BJ (cell line): ENCODE measurements at regions of chr17 and their contacts with region 1.

Region 1: DNA sequence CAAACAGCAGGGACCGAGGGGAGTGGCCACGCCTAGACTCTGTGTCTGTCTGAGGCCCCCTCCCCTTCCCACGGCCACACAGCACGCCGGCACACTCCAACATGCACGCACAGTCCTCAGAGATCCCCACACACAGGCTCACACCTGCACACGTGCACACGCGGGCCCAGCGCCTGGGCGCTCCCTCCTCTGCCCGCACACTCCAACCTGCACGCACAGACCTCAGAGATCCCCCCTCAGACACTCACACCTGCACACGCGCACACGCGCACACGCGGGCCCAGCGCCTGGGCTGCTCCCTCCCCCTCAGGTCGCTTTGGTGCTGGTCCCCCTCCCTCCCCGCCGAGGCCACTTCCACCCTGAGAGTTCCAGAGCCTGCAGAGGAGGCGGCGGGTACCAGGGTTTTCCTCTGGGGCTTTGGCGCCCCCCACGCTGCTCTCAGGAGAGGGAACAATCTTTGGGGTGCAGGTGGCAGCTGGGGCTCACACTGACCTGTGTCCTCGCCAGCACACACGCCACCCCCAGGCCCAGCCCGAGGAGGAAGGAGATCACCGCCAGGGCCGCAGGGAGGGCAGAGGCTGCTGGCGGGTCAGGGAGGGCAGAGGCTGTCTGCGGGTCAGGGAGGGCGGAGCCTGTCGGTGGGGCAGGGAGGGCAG is 1.6 kb downstream of the CD7 start:
- DNase-seq: no peak
- H3K4me3 ChIP-seq: no peak overlapping the region
- H3K27me3 ChIP-seq: peaks cover 9% of the 10 kb centered on the region
- CTCF ChIP-seq: no peak

Region 2: DNA sequence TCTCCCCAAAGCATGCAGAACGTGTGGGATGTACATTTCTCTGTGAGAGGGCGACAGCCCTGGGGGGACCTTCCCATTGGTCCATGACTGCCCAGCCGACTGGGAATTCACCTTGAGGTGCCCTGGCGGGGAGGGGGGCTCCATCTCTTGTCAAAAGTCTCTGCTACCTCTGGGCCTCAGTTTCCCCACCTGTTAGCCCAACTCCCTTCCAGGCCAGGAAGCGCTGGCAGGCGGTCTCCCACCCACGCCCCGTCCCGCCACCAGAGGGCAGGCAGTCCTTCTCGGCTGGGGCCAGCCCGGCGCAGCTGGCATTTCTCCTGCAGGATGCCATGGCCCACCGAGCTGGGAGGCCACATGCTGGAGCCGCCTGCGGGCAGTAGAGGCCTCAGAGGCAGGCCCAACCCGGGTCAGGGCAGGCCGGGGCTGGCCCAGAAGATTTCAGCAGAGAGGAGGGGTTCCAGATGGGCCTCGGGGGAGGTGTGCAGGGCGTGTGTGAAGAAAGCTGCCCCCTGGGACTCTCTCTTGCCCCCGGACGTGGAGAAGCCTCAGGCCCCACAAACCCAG is 15.0 kb before region 1 on chr17:
- CTCF ChIA-PET with region 1: interaction called, 11 read pairs
- POLR2A ChIA-PET with region 1: no interaction called
- DNase-seq: no peak
- H3K4me3 ChIP-seq: no peak overlapping the region
- H3K27me3 ChIP-seq: no peaks in the 10 kb centered on the region
- CTCF ChIP-seq: peak; percentile 87